Caco-2 (cell line): ENCODE measurements at regions of chr12 and their contacts with region 1.

Region 1: DNA sequence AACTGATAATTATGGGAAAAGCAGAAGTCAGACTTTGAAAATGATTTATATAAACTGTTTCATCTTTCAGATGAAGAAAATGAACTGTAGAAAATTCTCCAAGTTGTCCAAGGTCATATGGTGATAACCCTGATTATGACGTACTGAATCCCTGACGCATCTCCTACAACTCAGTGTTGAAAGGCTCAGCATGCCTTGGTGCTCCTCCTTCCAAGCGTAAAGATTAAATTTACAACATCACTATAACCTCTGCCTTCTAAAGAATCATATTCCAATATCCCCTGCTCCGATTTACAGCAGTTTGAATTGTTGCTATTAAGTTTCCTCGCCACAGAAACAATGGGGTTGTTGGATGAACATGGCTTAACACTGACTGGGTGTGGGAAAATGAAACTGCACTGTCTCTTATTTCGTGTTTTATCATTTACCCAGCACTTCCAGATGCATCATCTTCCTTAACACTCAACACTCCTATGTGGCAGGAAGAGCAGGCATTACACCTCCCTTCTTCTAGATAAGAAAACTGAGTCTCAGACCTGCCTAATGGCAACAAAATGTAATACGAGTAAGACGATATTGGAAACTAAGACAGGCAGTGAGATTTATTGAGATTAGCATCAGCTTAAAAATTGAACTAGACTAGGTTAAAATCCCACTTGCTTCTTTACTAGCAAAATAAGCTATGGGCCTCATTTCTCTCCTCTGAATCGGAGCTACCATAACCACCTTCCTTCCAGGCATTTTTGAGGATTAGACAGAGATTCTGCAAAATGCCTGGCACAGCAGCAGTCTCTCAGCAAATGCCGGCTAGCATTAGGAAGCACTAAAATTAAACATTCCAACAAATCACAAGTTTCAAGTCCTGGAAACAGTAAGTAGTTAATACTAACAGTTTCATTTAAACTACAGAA is 74.2 kb downstream of the PPM1H start:
- DNase-seq: no peak
- H3K4me3 ChIP-seq: no peak overlapping the region
- H3K4me3 Mint-ChIP-seq: no peak overlapping the region
- H3K27ac Mint-ChIP-seq: peak overlapping the region; percentile 36
- H3K4me1 ChIP-seq: peaks cover 56% of the 10 kb centered on the region
- H3K4me1 Mint-ChIP-seq: peaks cover 44% of the 10 kb centered on the region
- H3K27me3 ChIP-seq: no peaks in the 10 kb centered on the region
- H3K27me3 Mint-ChIP-seq: no peaks in the 10 kb centered on the region
- CTCF ChIP-seq: no peak

Region 2: GRCh38 chr12:62848421-62848820 is 12.3 kb before region 1 on chr12:
- CTCF ChIA-PET with region 1: no interaction called
- POLR2A ChIA-PET with region 1: interaction called, 12 read pairs
- intact Hi-C with region 1: no loop called
- DNase-seq: no peak
- H3K4me3 ChIP-seq: no peak overlapping the region
- H3K4me3 Mint-ChIP-seq: no peak overlapping the region
- H3K27ac Mint-ChIP-seq: peak overlapping the region; percentile 42
- H3K4me1 ChIP-seq: peaks cover 90% of the 10 kb centered on the region
- H3K4me1 Mint-ChIP-seq: peaks cover 39% of the 10 kb centered on the region
- H3K27me3 ChIP-seq: no peaks in the 10 kb centered on the region
- H3K27me3 Mint-ChIP-seq: no peaks in the 10 kb centered on the region
- CTCF ChIP-seq: no peak